BJ (cell line): ENCODE measurements at regions of chr15 and their contacts with region 1.

Region 1: DNA sequence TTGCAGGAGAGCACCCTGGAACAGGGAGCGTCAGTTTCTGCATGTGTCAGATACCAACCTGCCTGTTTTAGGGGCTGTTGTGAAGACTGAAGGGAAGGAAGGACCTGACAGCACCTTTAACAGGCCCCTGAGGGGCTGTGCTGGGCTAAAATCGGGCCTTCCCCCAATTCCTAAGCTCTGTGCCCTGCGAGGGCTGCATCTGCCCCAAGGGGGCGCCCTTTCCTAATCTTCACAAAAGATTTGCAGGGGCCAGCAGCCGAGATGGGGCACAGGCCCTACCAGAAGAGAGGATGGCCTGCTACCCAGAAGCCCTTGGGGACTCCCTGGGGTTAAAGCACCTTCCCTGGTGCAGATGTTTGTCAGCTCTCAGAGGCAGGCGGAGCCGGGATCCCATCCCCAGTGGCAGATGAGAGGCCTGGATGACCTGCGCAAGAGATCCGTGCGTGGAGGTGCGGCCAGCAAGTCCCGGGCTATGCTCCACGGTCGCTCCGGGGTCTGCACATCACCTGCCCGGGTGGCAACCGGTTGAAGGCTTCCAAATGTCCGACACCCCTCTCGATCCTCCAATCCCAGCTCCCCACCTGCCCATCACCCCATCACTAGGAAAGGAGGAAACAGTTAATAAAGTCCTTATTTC is 53.6 kb downstream of the RHCG start:
- DNase-seq: no peak
- H3K4me3 ChIP-seq: no peak overlapping the region
- H3K27me3 ChIP-seq: peaks cover 36% of the 10 kb centered on the region
- CTCF ChIP-seq: peak; percentile 74

Region 2: GRCh38 chr15:89430530-89431341 is 12.1 kb before region 1 on chr15:
- CTCF ChIA-PET with region 1: interaction called, 23 read pairs
- POLR2A ChIA-PET with region 1: no interaction called
- DNase-seq: peak; percentile 6
- H3K4me3 ChIP-seq: peak overlapping the region; percentile 35
- H3K27me3 ChIP-seq: peaks cover 11% of the 10 kb centered on the region
- CTCF ChIP-seq: peak; percentile 97

Region 3: GRCh38 chr15:89457097-89457496 is 14.3 kb after region 1 on chr15:
- CTCF ChIA-PET with region 1: interaction called, 21 read pairs
- POLR2A ChIA-PET with region 1: no interaction called
- DNase-seq: no peak
- H3K4me3 ChIP-seq: no peak overlapping the region
- H3K27me3 ChIP-seq: peaks cover 5% of the 10 kb centered on the region
- CTCF ChIP-seq: no peak

Region 4: DNA sequence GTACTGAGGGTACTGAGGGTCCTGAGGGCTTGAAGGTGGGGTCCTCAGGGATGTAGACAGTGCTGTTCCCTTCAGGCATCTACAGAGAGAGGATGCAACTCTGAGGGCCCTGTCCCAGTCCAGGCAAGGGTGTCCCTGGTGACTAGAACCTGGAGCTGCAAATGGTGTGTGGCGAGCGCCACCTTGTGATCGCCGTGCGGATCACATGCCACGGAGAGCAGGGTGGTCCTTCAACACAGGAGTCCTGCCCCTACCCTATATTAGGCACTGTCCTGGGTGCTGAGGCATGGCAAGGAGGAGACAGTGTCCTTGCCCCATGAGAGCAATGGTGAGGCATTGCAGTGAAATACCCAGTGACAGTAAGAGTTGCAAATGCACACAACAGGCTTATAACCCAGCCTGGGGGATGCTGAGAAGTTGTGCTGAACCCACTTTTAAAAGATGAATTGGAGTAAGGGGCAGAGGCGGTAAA is 30.0 kb after region 1 on chr15:
- CTCF ChIA-PET with region 1: interaction called, 62 read pairs
- POLR2A ChIA-PET with region 1: no interaction called
- DNase-seq: no peak
- H3K4me3 ChIP-seq: no peak overlapping the region
- H3K27me3 ChIP-seq: peaks cover 14% of the 10 kb centered on the region
- CTCF ChIP-seq: peak; percentile 85

Region 5: DNA sequence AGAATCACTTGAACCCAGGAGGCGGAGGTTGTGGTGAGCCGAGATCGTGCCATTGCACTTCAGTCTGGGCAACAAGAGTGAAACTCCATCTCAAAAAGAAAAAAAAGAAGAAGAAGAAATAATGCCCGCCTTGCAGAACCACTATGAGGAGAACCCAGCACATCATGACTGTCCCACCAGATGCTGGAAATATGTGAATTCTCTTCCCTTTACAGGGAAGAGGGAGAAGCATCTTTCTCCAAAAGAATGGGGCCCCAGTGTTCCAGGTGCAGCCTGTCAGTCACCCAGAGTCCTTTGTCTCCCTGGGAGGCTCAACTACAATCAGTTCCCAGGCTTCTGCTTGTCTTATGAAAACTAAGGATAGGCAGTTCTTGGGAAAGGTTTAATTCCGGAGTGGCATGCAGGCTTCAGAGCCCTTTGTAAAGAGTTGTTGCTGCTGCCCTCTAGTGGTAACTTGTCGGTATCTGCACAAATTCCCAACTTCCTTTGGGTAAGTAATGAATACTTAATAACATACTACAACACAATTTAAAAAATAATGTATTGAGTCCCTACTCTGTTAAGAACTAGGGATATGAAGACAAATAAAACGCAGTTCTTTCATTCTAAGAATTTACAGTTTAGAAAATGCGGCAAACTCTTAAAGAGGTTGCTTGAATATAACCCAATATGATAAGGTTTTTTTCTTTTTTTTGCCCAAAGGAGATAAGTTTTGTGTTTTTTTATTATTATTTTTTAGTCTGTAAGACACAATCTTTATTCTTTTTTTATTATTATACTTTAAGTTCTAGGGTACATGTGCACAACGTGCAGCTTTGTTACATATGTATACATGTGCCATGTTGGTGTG is 113.8 kb after region 1 on chr15:
- CTCF ChIA-PET with region 1: interaction called, 12 read pairs
- POLR2A ChIA-PET with region 1: no interaction called
- DNase-seq: peak; percentile 19
- H3K4me3 ChIP-seq: no peak overlapping the region
- H3K27me3 ChIP-seq: peaks cover 11% of the 10 kb centered on the region
- CTCF ChIP-seq: peak; percentile 83